OCI-LY7 (cell line): ENCODE measurements at regions of chr18 and their contacts with region 1.

Region 1: DNA sequence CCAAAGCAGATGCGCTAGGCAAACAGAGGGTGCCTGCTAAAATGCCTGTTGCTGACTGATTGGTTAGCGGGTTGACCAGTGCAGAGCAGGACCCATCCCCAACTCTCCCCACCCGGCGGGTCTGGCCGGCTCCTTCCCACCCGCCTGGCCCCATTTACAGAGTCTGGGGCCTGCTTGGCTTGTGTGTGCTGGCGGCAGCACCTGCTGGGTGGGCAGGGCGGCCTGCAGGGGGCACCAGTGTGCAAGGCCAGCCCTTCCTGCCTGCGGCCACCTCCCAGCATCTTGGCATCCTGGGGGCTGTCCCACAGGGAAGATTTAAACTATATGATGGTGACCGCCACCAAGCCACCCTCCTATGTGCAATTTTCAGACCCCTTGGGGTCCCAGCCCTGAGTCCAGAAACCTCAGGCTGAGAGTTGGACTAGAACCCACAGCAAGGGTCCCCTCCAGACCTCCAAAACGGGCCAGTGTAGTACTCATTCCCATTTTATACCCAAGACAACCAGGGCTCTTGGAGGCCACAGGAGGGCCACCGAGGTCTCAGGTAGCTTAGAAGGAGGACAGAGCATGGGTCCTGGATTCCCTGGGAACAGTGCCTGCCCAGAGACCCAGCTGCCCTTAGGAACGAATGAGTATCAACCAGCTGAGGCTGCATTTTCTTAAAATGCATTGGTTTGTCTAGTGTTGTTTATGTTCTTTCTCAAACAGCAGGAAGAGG is 173.6 kb downstream of the SMAD7 start:
- DNase-seq: peak; percentile 68
- H3K4me3 ChIP-seq: no peak overlapping the region
- H3K27ac ChIP-seq: no peak overlapping the region
- H3K4me1 ChIP-seq: peaks cover 34% of the 10 kb centered on the region
- CTCF ChIP-seq: peak; percentile 86

Region 2: DNA sequence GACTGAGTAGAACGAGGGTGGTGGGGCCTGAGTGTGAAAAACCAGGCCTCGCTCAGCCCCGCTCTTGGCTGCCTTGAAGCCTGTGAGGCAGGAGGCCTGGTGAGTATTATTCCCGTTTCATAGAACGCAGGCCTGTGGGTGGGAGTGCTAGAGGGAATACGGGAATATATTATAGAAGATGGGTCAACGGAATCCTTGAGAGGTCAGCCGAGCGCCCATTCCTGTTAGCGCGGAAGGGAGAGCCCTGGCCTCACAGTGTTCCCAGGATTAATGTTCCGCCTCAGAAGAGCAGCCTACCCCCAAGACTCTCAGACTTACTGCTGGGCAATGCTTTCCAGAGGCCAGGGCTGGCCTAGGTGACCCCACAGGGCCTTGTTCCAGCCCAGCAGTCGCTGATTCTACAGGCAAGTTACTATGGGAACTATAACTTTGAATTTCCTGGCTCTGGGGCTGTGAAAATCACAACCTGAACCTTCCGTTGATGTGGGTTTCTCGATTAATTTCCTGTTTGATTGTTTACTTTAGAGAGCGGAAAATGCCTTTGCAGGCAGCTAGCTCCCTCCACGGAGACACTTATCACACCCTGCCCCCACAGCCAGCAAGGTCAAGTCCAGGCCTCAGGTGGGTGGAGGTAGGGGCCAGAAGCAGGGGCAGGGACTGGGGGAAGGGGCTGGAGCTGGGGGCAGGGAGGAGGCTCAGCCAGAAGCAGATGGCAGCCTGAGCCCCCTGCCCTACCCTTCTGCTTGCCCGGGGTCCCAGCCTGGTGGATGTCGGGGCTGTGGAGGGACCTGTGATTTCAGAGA is 65.3 kb after region 1 on chr18:
- CTCF ChIA-PET with region 1: no interaction called
- POLR2A ChIA-PET with region 1: no interaction called
- intact Hi-C with region 1: no loop called
- DNase-seq: peak; percentile 45
- H3K4me3 ChIP-seq: no peak overlapping the region
- H3K27ac ChIP-seq: peak overlapping the region; percentile 18
- H3K4me1 ChIP-seq: peaks cover 32% of the 10 kb centered on the region
- CTCF ChIP-seq: no peak

Region 3: DNA sequence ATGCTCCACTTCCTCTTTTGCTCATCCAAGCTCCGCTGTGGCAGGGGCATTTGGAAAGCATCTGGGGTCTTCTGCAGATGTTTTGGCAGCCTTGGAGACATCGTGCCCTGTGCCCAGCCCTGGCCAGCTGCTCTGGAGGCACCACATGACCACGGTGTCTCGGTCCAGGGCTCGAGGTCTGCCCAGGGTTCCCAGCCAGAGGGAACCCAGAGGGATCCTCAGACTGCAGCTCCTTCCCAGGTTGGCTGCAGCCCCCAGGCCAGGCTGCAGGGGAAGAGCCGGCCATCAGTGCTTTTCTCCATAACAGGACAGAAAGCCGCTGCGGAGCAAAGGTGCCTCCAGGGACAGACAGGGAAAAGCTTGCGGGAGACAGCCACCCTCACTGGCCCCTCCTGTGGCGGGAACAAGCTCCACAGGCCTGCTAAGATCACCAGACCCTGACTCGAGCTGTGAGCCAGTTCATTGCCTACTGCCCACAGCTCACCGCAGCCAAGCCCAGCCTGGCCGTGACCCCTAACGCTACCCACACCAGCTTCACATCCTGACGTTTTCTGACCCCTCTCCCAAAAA is 98.8 kb after region 1 on chr18:
- CTCF ChIA-PET with region 1: no interaction called
- POLR2A ChIA-PET with region 1: no interaction called
- intact Hi-C with region 1: no loop called
- DNase-seq: no peak
- H3K4me3 ChIP-seq: no peak overlapping the region
- H3K27ac ChIP-seq: no peak overlapping the region
- H3K4me1 ChIP-seq: peaks cover 2% of the 10 kb centered on the region
- CTCF ChIP-seq: no peak

Region 4: GRCh38 chr18:48896690-48897511 is 119.7 kb after region 1 on chr18:
- CTCF ChIA-PET with region 1: no interaction called
- POLR2A ChIA-PET with region 1: no interaction called
- intact Hi-C with region 1: loop called (anchors 5 kb)
- DNase-seq: peak; percentile 13
- H3K4me3 ChIP-seq: no peak overlapping the region
- H3K27ac ChIP-seq: no peak overlapping the region
- H3K4me1 ChIP-seq: peaks cover 11% of the 10 kb centered on the region
- CTCF ChIP-seq: 0 out of 2 replicates have a peak, but pooled peaks have one; percentile 26

Region 5: GRCh38 chr18:48913201-48913600 is 136.0 kb after region 1 on chr18:
- CTCF ChIA-PET with region 1: interaction called, 3 read pairs
- POLR2A ChIA-PET with region 1: no interaction called
- intact Hi-C with region 1: loop called (anchors 1 kb)
- DNase-seq: peak; percentile 48
- H3K4me3 ChIP-seq: no peak overlapping the region
- H3K27ac ChIP-seq: no peak overlapping the region
- H3K4me1 ChIP-seq: peaks cover 29% of the 10 kb centered on the region
- CTCF ChIP-seq: peak; percentile 57